GM10248 (cell line): ENCODE measurements at regions of chr6 and their contacts with region 1.

Region 1: DNA sequence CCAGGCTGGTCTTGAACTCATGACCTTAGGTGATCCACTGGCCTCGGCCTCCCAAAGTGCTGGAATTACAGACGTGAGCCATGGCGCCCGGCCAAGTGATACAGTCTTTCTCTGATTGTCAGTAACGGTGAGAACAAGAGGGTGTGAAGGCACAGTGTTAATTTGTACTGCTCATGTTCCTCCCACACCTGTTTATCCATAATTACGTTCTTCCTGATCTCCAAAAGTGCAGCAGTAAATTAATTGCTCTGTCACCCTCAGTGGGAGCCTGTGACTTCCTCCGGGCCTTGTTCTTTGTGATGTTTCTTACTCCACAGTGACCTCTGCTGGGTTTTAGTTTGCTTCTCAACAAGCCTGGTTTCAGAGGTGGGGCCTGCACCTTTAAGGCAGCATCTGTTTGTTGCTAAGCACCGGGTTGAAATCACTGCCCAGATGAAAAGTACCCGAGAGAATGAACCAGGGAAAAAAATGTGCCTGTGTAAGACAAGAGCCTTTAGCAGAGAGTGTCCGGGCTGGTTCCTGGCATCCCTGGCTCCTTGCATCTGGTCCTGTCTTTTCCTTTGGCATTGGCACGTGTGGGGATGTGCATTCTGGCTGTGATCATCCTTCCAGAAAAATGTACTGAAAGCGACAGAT is 89.1 kb upstream of the CLDN20 start:
- DNase-seq: peak; percentile 73
- CTCF ChIP-seq: peak; percentile 57

Region 2: GRCh38 chr6:154868143-154868594 is 306.5 kb before region 1 on chr6:
- CTCF ChIA-PET with region 1: interaction called, 11 read pairs
- POLR2A ChIA-PET with region 1: no interaction called
- DNase-seq: no peak
- CTCF ChIP-seq: peak; percentile 40

Region 3: GRCh38 chr6:155158030-155158843 is 16.5 kb before region 1 on chr6:
- CTCF ChIA-PET with region 1: interaction called, 15 read pairs
- POLR2A ChIA-PET with region 1: interaction called, 5 read pairs
- DNase-seq: no peak
- CTCF ChIP-seq: no peak

Region 4: GRCh38 chr6:155223646-155224451 is 49.2 kb after region 1 on chr6:
- CTCF ChIA-PET with region 1: interaction called, 16 read pairs
- POLR2A ChIA-PET with region 1: no interaction called
- DNase-seq: peak; percentile 77
- CTCF ChIP-seq: no peak

Region 5: GRCh38 chr6:155248008-155249001 is 73.6 kb after region 1 on chr6:
- CTCF ChIA-PET with region 1: interaction called, 71 read pairs
- POLR2A ChIA-PET with region 1: interaction called, 3 read pairs
- DNase-seq: peak; percentile 64
- CTCF ChIP-seq: peak; percentile 44

Region 6: DNA sequence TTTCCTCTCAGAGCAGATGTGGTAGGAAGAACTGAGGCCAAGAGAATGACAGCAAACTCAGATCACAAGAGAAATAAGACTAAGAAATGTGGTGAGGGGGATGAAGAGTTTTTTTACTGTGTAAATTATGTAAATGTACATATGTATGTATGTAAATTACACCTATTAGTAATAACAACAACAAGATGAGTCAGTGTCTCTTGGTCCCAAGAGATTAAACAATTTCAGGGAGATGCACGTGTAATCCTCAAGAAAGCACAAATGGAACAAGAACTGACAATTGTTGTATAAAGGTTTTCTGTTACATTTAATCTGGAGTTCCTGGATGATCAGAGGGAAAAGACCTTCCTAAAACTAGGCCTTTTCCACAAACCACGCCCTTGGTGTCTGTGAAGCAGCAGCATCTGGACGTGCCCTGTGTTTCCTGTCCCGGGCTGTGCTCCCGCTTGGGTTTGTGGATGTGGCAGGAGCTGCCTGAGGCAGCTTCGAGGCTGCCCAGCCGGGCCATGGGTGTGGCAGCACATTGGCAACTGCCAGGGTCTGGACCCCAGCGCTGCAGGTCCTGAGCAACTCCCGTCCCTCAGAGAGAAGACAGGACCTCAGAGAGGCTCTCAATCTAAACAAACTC is 90.1 kb after region 1 on chr6:
- CTCF ChIA-PET with region 1: interaction called, 16 read pairs
- POLR2A ChIA-PET with region 1: no interaction called
- DNase-seq: no peak
- CTCF ChIP-seq: no peak